Adrenal gland (tissue), 19 donors: ENCODE measurements at regions of chr2 and their contacts with region 1.

Region 1: DNA sequence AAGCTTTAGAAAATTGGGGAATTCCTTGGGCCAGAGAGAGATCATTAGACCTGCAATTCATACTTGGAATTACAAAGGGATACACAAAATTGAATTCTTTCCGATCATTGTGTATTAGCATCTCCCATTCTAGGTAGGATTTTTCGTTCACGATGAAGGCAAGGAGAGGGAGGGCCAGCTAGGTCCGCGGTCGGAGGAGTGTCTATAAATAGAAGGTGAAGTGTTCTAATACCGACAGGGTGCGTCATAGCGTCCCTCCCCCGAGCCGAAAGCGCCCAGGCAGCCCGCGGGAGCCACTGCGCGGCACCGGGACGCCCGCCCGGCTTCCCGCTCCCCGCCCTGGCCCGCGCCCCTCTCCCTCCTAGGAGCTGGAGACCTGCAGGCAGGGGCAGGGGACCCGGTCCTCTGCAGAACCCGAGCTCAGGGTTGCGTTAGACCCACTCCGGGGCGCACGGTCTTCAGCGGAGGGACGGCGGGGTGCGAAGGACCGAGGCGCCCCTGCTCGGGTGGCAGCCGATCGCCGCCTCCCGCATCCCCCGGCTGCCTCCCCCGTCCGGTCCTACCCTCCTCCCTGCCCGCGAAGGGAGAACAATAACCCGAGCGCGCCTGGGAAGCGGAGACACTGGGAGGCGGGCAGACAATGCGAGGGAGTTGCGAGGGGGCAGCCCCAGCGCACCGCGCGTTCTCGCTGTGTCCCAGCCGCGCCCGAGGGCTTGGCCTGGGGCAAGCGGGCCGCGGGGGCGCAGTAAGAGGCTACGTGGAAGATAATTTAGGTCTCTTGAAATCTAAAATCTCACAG is 114.2 kb upstream of the SERTAD2 start:
- DNase-seq: peak; percentile 88 to 97 (median 93)
- H3K4me3 ChIP-seq: peak overlapping the region; percentile 43 to 94 (median 54)
- H3K27ac ChIP-seq: peak overlapping the region; percentile 82 to 99 (median 94)
- H3K4me1 ChIP-seq: peaks cover 7 to 10% of the 10 kb centered on the region in 2 donors
- H3K27me3 ChIP-seq: no peaks in the 10 kb centered on the region
- CTCF ChIP-seq: no peak
- POLR2A ChIP-seq: peak; percentile 76 to 97

Region 2: DNA sequence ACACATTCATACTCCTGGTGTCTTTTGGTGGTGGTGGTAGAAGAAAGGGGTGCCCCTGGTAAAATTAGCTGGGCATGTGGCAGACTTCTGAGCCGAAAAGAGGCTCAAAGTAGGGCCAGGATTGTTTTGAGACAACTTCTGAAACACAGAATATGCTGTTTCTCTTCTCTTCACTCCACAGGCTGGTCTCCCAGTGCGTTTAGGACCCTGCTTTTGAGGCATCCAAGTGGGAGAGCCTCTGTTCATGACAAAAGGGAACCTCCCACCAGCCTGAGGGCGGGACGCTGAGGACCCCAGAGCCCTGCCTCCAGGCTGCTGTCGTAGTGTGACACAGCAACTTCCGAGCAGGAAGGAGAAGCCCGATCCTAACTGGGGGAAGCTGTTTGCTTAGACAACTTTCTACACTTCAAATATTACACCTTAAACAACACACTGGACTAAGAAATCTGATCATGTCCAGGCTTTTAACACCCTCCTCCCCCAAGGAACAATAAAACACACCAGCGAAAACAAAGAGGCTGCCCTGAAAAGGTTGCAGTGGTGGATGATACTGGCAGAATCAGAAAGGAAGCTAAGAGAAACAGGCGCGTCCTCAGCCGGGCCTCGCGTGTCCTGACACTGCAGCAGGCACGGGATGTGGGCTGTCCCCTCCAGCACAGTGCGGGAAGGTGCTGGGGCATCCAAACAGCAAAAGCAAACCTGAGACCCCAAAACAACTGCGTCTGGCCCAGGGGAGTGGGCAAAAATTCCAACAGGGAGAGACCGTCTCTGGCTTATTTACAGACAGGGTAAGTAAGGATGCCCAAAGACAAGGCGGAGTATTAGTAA is 123.5 kb before region 1 on chr2:
- intact Hi-C with region 1: loop called in 1 of 2 experiments (anchors 10 kb)
- DNase-seq: peak; percentile 60 to 90 (median 79)
- H3K4me3 ChIP-seq: peak overlapping the region in 2 of 4 donors; percentile 23 to 59
- H3K27ac ChIP-seq: peak overlapping the region; percentile 69 to 94 (median 93)
- H3K4me1 ChIP-seq: peaks cover 33 to 83% of the 10 kb centered on the region in 2 donors
- H3K27me3 ChIP-seq: no peaks in the 10 kb centered on the region
- CTCF ChIP-seq: no peak
- POLR2A ChIP-seq: peak; percentile 68 to 78

Region 3: GRCh38 chr2:64945973-64946768 is 178.3 kb after region 1 on chr2:
- intact Hi-C with region 1: no loop called
- DNase-seq: no peak
- H3K4me3 ChIP-seq: no peak overlapping the region
- H3K27ac ChIP-seq: no peak overlapping the region
- H3K4me1 ChIP-seq: peaks cover 0 to 17% of the 10 kb centered on the region in 2 donors
- H3K27me3 ChIP-seq: no peaks in the 10 kb centered on the region
- CTCF ChIP-seq: no peak
- POLR2A ChIP-seq: no peak

Region 4: DNA sequence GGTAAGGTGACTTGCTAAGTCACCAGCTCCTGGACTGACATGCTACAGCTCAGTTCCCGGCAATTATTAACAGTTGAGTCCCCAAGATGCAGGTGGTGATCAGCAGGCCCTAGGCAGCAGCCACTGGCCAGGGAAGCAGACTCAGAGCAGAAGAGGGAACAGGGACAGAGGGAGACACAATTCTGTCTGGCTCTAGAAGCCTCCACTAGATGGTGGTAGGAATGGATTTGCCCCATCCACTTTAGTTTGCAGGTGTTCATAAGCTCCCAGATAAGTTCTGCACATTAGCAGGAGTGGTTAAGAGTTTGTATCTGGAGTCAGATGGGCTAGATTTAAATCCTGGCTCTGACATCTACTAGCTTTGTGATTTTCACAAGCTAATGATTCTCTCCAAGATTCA is 195.8 kb after region 1 on chr2:
- intact Hi-C with region 1: no loop called
- DNase-seq: no peak
- H3K4me3 ChIP-seq: no peak overlapping the region
- H3K27ac ChIP-seq: no peak overlapping the region
- H3K4me1 ChIP-seq: peaks cover 0 to 7% of the 10 kb centered on the region in 2 donors
- H3K27me3 ChIP-seq: no peaks in the 10 kb centered on the region
- CTCF ChIP-seq: no peak
- POLR2A ChIP-seq: no peak